ENCODE measurements at regions of chr12 and their contacts with region 1.

Region 1: DNA sequence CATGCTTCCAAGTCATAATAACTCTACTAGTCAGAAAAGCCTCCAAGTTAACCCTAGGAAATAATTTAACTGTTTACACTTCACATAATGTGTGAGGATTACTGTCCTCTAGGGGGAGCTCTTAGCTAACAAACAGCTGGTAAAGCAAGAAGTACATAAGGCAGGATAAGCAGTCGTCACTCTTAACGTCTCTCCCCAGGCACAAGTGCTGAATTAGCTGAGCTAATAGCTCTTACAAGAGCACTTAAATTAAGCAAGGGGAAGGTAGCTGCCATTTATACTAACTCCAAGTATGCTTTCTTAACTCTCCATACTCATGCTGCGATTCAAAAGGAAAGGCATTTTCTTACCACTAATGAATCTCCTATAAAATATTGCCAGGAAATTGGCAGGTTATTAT is 79.3 kb upstream of the TSPAN11 start:
- DNase-seq: peak; percentile 85
- H3K4me3 ChIP-seq: no peak overlapping the region
- H3K27ac ChIP-seq: no peak overlapping the region
- H3K4me1 ChIP-seq: no peaks in the 10 kb centered on the region
- H3K27me3 ChIP-seq: no peaks in the 10 kb centered on the region
- CTCF ChIP-seq: peak; percentile 86

Region 2: DNA sequence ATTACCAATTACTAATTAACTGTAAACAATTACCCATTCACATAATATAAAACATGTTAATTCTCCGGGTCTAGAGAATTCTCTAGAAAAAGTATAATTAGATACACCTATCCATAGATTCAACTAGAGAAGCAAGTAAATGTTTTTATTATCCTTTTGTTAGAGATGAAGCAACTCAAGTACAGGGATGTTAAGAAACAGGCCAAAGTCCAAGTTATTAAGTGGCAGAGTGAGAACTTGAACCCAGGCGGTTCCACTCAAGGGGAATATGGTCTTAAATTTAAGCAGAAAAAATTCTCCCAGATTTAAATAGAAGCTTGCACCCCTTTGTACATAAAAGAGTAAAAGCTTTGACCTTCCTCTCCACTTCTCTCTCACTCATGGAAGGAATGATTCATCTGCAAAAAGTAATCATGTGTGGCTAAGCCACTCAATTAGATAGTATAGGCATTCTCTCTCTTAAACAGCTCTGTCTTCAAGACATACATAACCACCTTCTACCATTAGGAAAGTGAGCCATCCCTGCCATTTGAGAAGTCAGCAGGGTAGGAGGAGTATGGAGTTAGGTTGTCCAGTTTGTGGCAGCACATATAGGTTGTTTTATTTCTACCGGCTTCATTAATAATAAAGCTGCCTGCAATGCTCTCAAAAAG is 1500.4 kb before region 1 on chr12:
- CTCF ChIA-PET with region 1: interaction called, 10 read pairs
- POLR2A ChIA-PET with region 1: no interaction called
- intact Hi-C with region 1: no loop called
- DNase-seq: no peak
- H3K4me3 ChIP-seq: no peak overlapping the region
- H3K27ac ChIP-seq: no peak overlapping the region
- H3K4me1 ChIP-seq: no peaks in the 10 kb centered on the region
- H3K27me3 ChIP-seq: no peaks in the 10 kb centered on the region
- CTCF ChIP-seq: no peak

Region 3: DNA sequence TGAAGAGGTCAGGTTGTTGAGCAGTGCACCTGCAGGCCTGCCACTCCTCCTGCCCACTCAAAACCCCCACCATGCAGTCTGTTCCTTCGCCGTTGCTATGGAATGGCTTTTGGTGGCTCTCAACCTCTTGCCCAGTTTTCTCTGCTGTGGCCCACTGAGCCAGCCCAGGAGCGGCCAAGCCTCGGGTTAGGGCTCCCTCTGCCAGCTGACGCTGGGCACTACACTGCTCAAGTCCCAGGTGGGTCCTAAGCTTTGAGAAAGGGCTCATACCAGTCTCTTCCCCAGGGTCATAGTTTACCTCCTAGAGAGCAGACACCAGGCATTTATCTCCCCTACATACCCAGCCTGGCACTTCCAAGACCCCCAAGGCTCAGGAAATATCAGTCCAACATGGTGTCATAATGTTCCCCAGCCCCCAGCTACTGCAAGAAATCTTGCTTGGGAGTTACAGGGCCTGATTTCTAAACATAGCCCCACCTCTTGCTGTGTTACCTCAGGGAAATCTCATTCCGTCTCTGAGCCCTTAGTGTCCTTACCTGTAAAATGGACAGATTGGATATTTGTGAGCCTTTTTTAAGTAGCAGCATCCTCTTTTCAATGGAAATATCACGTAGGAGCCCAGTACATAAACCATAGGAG is 138.7 kb after region 1 on chr12:
- CTCF ChIA-PET with region 1: interaction called, 25 read pairs
- POLR2A ChIA-PET with region 1: no interaction called
- intact Hi-C with region 1: loop called (anchors 1 kb)
- DNase-seq: peak; percentile 73
- H3K4me3 ChIP-seq: no peak overlapping the region
- H3K27ac ChIP-seq: no peak overlapping the region
- H3K4me1 ChIP-seq: no peaks in the 10 kb centered on the region
- H3K27me3 ChIP-seq: no peaks in the 10 kb centered on the region
- CTCF ChIP-seq: peak; percentile 85

Region 4: GRCh38 chr12:31267966-31268365 is 420.7 kb after region 1 on chr12:
- CTCF ChIA-PET with region 1: interaction called, 13 read pairs
- POLR2A ChIA-PET with region 1: no interaction called
- intact Hi-C with region 1: no loop called
- DNase-seq: no peak
- H3K4me3 ChIP-seq: no peak overlapping the region
- H3K27ac ChIP-seq: no peak overlapping the region
- H3K4me1 ChIP-seq: no peaks in the 10 kb centered on the region
- H3K27me3 ChIP-seq: no peaks in the 10 kb centered on the region
- CTCF ChIP-seq: no peak